ENCODE measurements at regions of chr1 and their contacts with region 1.

Region 1: GRCh38 chr1:9957726-9958125 is 14.5 kb downstream of the NMNAT1 start:
- DNase-seq: no peak
- H3K4me3 ChIP-seq: no peak overlapping the region
- H3K4me3 Mint-ChIP-seq: no peak overlapping the region
- H3K27ac ChIP-seq: no peak overlapping the region
- H3K27ac Mint-ChIP-seq: no peak overlapping the region
- H3K4me1 ChIP-seq: no peaks in the 10 kb centered on the region
- H3K4me1 Mint-ChIP-seq: no peaks in the 10 kb centered on the region
- H3K27me3 ChIP-seq: no peaks in the 10 kb centered on the region
- H3K27me3 Mint-ChIP-seq: no peaks in the 10 kb centered on the region

Region 2: GRCh38 chr1:9861360-9861759 is 96.4 kb before region 1 on chr1:
- CTCF ChIA-PET with region 1: no interaction called
- POLR2A ChIA-PET with region 1: no interaction called
- intact Hi-C with region 1: no loop called
- DNase-seq: no peak
- H3K4me3 ChIP-seq: no peak overlapping the region
- H3K4me3 Mint-ChIP-seq: no peak overlapping the region
- H3K27ac ChIP-seq: no peak overlapping the region
- H3K27ac Mint-ChIP-seq: peak overlapping the region in 1 of 7 donors; percentile 6
- H3K4me1 ChIP-seq: no peaks in the 10 kb centered on the region
- H3K4me1 Mint-ChIP-seq: no peaks in the 10 kb centered on the region
- H3K27me3 ChIP-seq: no peaks in the 10 kb centered on the region
- H3K27me3 Mint-ChIP-seq: no peaks in the 10 kb centered on the region

Region 3: GRCh38 chr1:9910425-9911178 is 47.1 kb before region 1 on chr1:
- CTCF ChIA-PET with region 1: no interaction called
- POLR2A ChIA-PET with region 1: no interaction called
- intact Hi-C with region 1: no loop called
- DNase-seq: peak; percentile 100
- H3K4me3 ChIP-seq: peak overlapping the region; percentile 71 to 78
- H3K4me3 Mint-ChIP-seq: peak overlapping the region; percentile 92 to 99 (median 96)
- H3K27ac ChIP-seq: peak overlapping the region; percentile 64
- H3K27ac Mint-ChIP-seq: peak overlapping the region; percentile 85 to 99 (median 98)
- H3K4me1 ChIP-seq: peaks cover 16% of the 10 kb centered on the region
- H3K4me1 Mint-ChIP-seq: peaks cover 27 to 39% (median 34%) of the 10 kb centered on the region in 4 donors
- H3K27me3 ChIP-seq: no peaks in the 10 kb centered on the region
- H3K27me3 Mint-ChIP-seq: no peaks in the 10 kb centered on the region

Region 4: DNA sequence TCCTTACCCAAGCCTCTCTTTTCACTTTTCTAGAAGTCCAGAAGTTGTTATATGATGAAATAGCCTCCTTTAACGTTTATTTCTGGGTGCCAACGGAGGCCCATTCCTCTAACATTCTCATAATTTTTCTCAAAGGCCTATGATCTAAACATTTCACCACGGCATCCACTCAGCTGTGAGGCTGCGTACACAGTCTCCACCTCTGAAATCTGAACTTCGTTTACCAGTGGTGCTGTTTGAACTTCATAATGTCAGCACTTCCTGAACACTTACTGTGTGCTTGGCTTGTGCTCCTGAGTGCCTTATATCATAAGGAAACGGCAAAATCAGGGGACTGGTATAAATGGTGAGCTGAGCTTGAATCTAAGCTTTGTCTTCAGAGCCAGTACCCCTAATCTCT is 27.3 kb after region 1 on chr1:
- CTCF ChIA-PET with region 1: no interaction called
- POLR2A ChIA-PET with region 1: no interaction called
- intact Hi-C with region 1: no loop called
- DNase-seq: no peak
- H3K4me3 ChIP-seq: no peak overlapping the region
- H3K4me3 Mint-ChIP-seq: no peak overlapping the region
- H3K27ac ChIP-seq: no peak overlapping the region
- H3K27ac Mint-ChIP-seq: no peak overlapping the region
- H3K4me1 ChIP-seq: no peaks in the 10 kb centered on the region
- H3K4me1 Mint-ChIP-seq: no peaks in the 10 kb centered on the region
- H3K27me3 ChIP-seq: no peaks in the 10 kb centered on the region
- H3K27me3 Mint-ChIP-seq: no peaks in the 10 kb centered on the region

Region 5: DNA sequence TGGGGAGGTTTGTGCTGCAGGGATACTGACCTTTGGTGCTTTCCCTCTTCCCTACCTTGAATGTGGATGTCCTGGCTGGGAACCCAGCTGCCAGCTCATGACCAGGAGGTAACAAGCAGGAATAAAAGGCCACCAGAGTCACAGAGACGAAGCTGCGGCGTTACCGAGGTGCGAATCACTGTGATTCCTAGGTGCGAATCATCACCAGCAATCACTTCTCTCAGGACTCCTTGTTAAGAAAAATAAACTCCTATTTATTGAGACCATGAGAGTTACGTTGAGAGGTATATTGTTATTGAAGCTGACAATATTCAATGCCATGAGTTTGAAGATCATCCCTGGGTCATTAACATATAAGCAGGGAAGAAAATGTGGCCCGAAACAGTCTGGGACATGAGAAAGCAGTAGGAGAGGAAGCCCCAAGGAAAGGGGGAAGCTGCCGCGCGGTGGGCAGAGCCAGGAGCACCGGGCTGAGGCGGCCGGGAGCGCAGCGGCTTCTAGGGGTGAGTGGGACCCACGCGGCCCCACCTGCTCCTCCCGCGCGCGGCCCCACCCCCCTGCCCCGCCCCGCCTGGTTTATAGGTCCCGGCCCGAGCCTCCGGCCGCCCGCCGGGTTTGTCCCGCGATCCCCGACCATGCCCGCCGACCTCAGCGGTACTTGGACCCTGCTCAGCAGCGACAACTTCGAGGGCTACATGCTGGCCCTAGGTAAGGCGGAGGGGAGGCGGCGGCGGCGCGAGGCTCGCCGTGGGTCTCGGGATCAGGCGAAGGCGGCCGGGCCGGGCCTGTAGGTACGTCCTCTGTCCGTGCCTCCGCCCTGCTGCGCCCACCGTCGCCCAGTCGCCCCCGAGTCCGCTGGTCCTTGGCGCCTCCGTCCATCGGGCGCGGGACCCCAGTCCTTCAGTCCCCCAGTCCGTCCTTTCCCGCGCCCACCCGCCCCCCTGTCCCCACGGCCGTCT is 39.2 kb after region 1 on chr1 and contains the start of gene RBP7:
- CTCF ChIA-PET with region 1: no interaction called
- POLR2A ChIA-PET with region 1: no interaction called
- intact Hi-C with region 1: loop called (anchors 5 kb)
- DNase-seq: peak in 1 of 5 donors; percentile 6
- H3K4me3 ChIP-seq: no peak within 1 kb of the TSS
- H3K4me3 Mint-ChIP-seq: peak within 1 kb of the TSS; percentile 80 to 91 (median 86)
- H3K27ac ChIP-seq: no peak within 1 kb of the TSS
- H3K27ac Mint-ChIP-seq: no peak within 1 kb of the TSS
- H3K4me1 ChIP-seq: peaks cover 6% of the 10 kb centered on the region
- H3K4me1 Mint-ChIP-seq: peaks cover 6 to 12% (median 9%) of the 10 kb centered on the region in 4 donors
- H3K27me3 ChIP-seq: peaks cover 15% of the 10 kb centered on the region
- H3K27me3 Mint-ChIP-seq: peaks cover 23 to 29% of the 10 kb centered on the region in 2 donors
- total RNA-seq, gene RBP7: not detected